ENCODE measurements at regions of chr11 and their contacts with region 1.

Region 1: DNA sequence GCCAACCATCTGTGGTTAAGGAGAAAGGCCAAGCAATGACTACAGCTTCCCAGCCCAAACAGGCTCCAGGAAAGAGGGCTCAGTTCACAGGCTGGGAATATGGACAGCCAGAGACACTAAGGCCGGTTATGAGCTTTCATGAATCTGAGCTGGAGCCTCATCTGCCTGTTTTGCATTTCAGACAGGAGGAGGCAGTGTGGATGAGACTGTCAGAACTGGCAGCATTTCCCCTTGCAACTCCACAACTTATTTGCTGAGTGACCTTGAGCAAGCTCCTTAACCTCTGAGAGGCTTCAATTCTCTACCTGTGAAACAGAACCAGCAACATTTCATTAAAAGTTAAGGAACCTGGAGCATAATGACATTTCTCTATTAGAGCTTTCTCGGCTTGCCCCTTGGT is 264.0 kb downstream of the ETS1 start:
- DNase-seq: peak; percentile 72
- H3K4me3 Mint-ChIP-seq: peak overlapping the region; percentile 32
- H3K27ac Mint-ChIP-seq: peak overlapping the region; percentile 90
- H3K4me1 Mint-ChIP-seq: peaks cover 87% of the 10 kb centered on the region
- H3K27me3 Mint-ChIP-seq: no peaks in the 10 kb centered on the region

Region 2: GRCh38 chr11:128195057-128195751 is 128.2 kb before region 1 on chr11:
- CTCF ChIA-PET with region 1: no interaction called
- intact Hi-C with region 1: loop called (anchors 1 kb)
- DNase-seq: peak; percentile 77
- H3K4me3 Mint-ChIP-seq: peak overlapping the region; percentile 6
- H3K27ac Mint-ChIP-seq: peak overlapping the region; percentile 32
- H3K4me1 Mint-ChIP-seq: peaks cover 42% of the 10 kb centered on the region
- H3K27me3 Mint-ChIP-seq: no peaks in the 10 kb centered on the region

Region 3: GRCh38 chr11:128379587-128380580 is 56.5 kb after region 1 on chr11:
- CTCF ChIA-PET with region 1: no interaction called
- intact Hi-C with region 1: loop called (anchors 2 kb)
- DNase-seq: peak; percentile 56
- H3K4me3 Mint-ChIP-seq: no peak overlapping the region
- H3K27ac Mint-ChIP-seq: peak overlapping the region; percentile 61
- H3K4me1 Mint-ChIP-seq: peaks cover 37% of the 10 kb centered on the region
- H3K27me3 Mint-ChIP-seq: no peaks in the 10 kb centered on the region

Region 4: DNA sequence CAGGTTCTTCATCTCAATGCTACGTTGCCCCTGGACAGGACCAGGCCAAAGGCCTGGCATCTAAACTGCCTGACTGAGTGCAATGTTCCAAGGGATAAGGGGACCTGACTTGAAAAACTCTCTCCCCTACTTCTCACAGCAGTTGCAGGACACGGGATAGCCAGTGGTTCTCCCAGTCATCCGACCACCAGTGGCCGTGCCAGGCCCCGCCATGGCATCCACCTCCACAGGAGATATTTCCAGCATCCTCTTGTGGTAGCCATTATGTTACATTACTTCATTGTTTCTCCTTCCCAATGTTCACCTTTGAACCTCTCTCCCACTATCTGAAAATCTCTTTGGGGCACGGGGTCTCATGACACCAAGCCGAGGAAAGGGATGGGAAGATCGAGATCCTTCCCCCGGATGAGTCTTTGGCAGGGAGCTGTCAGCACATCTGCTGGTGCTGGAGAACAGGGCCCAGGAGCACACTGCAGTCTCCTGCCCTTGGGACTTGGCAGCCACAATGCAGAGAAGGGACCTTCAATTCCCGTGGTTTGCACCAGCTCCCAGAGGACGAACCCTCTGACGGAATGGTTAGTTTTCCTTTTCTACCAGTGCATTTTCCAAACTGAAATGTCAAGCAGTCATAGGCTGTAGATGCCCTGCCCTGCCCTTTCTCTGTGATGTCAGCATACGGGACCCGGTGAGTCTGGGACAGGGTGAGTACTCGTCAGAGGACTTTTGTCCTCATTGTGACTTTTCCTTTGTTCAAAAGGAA is 142.7 kb after region 1 on chr11:
- CTCF ChIA-PET with region 1: interaction called, 14 read pairs
- intact Hi-C with region 1: no loop called
- DNase-seq: peak; percentile 74
- H3K4me3 Mint-ChIP-seq: peak overlapping the region; percentile 74
- H3K27ac Mint-ChIP-seq: peak overlapping the region; percentile 97
- H3K4me1 Mint-ChIP-seq: peaks cover 94% of the 10 kb centered on the region
- H3K27me3 Mint-ChIP-seq: no peaks in the 10 kb centered on the region

Region 5: DNA sequence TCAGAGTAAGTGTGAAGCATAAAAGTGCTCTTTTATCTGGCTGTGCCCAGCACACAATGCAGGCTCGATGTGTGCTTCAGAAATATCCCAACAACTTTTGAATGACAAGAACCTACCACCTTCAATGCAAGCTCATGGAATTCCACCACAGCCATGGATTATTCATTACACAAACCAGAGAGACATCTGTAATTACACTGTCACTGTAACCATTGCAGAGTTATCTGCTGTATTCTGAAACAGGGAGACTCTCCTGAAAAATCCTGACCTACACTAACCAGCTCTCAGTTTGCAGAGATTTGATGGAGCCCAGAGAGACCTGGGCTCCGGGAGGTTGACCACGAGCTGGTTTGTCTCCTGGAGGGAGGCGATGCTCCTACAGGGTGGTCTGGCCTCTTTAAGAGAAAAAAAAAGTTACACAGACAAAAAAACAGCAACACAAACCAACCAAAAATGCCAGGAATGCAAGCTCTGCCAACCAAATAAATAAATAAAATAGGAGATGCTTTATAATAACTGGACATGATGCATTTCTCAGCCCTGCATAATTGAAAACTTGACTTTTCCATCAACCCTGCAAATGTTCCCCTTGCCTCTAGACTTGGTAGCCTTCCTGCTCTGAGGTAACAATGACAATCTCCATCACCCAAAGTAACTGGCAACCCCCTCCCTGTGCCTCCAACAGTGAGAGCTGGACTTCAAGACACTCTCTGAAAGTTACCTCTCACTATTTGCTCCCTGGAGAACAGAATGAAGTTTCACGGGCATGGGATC is 194.3 kb after region 1 on chr11:
- CTCF ChIA-PET with region 1: no interaction called
- intact Hi-C with region 1: no loop called
- DNase-seq: peak; percentile 54
- H3K4me3 Mint-ChIP-seq: peak overlapping the region; percentile 96
- H3K27ac Mint-ChIP-seq: peak overlapping the region; percentile 97
- H3K4me1 Mint-ChIP-seq: peaks cover 42% of the 10 kb centered on the region
- H3K27me3 Mint-ChIP-seq: no peaks in the 10 kb centered on the region

Region 6: DNA sequence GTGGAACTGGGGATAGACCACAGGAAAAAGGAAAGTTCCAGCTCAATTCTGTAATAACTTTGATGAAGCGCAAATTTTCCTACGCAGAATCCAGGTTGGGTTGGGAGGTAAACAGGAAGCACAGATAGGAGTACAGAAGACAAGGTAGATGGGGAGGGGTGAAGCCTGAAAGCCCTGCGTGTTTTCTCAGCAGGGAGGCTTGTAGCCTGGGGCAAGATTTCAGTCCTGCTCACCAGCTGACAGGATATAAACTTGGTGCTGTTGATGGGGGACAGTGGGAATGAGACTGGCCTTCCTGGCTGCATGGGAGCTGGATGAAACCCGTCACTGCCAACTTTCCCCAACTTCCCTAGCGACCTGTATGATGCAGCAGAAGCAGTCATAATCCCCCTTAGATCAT is 753.8 kb after region 1 on chr11:
- CTCF ChIA-PET with region 1: no interaction called
- intact Hi-C with region 1: no loop called
- DNase-seq: no peak
- H3K4me3 Mint-ChIP-seq: no peak overlapping the region
- H3K27ac Mint-ChIP-seq: no peak overlapping the region
- H3K4me1 Mint-ChIP-seq: no peaks in the 10 kb centered on the region
- H3K27me3 Mint-ChIP-seq: no peaks in the 10 kb centered on the region